Psoas muscle (tissue), 8 donors: ENCODE measurements at regions of chr10 and their contacts with region 1.

Region 1: GRCh38 chr10:7818295-7819122 is at the start of gene TAF3:
- DNase-seq: peak; percentile 93 to 96
- ATAC-seq: peak; percentile 94 to 97 (median 95)
- H3K4me3 ChIP-seq: peak within 1 kb of the TSS; percentile 87
- H3K27ac ChIP-seq: peak within 1 kb of the TSS; percentile 83
- H3K4me1 ChIP-seq: peaks cover 16% of the 10 kb centered on the region
- H3K27me3 ChIP-seq: no peaks in the 10 kb centered on the region
- CTCF ChIP-seq: no peak
- total RNA-seq, gene TAF3: 10.0 to 14.7 (median 13.6) TPM

Region 2: DNA sequence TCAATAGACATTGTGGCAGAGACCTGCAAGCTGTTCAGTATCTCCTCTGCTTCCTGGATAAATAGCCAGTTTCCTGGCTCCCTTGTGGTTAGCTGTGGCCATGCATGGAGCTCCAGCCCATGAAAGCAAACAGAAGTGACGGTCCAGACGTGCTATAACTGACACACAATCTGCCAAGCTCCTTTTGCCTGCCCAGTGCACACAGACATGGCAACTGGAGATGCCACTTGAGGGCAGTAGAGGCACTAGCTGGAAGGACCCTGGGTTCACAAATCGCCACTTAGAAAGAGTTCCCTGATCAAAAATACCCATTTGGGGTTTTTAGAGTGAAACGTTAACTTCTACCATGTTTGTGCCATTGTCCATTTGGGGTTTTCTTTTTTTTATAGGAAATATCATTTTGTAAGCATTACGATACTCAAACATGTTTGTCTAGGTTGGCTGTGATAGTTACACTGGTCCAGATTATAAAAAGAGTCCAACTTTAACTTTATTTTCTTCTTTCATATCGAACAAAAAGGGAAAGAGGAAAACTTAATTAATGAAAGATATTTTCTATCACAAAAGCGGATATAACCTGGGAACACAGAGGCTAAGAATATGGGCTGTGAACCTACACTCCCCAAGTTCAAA is 62.0 kb before region 1 on chr10:
- intact Hi-C with region 1: loop called (anchors 5 to 10 kb)
- DNase-seq: no peak
- ATAC-seq: peak in 3 of 4 donors; percentile 58 to 72 (median 67)
- H3K4me3 ChIP-seq: no peak overlapping the region
- H3K27ac ChIP-seq: no peak overlapping the region
- H3K4me1 ChIP-seq: no peaks in the 10 kb centered on the region
- H3K27me3 ChIP-seq: no peaks in the 10 kb centered on the region
- CTCF ChIP-seq: peak; percentile 31

Region 3: DNA sequence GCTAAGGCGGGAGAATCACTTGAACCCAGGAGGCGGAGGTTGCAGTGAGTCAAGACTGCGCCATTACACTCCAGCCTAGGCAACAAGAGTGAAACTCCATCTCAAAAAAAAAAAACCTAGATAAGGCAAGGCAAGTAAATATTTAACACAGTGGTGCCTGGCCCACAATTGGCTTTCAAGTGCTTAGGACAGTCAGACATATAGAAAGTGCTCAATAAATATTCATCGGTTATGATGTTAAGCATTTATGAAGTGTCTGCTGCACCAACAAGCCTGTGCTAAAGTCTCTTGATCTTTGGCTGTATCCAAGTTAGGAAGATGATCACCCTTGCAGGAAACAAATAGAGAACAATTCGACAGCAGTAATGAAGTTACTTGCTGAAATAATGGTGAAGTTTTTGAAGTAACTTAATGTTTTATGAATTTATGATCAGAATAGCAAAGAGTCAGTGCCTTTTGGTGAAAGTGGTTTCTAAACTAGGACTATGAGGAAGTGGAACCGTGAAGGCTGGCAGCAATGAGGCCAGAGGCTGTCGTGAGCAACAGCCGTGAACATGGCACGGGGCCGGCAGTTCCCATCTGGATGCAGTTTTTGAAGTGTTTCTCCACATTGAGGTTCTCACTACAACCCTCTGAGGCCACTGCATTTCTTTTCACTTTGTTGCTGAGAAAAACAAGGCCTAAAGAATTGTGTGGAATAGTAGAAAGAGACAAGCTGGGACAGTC is 187.9 kb after region 1 on chr10:
- intact Hi-C with region 1: no loop called
- DNase-seq: no peak
- ATAC-seq: no peak
- H3K4me3 ChIP-seq: no peak overlapping the region
- H3K27ac ChIP-seq: no peak overlapping the region
- H3K4me1 ChIP-seq: no peaks in the 10 kb centered on the region
- H3K27me3 ChIP-seq: no peaks in the 10 kb centered on the region
- CTCF ChIP-seq: no peak

Region 4: DNA sequence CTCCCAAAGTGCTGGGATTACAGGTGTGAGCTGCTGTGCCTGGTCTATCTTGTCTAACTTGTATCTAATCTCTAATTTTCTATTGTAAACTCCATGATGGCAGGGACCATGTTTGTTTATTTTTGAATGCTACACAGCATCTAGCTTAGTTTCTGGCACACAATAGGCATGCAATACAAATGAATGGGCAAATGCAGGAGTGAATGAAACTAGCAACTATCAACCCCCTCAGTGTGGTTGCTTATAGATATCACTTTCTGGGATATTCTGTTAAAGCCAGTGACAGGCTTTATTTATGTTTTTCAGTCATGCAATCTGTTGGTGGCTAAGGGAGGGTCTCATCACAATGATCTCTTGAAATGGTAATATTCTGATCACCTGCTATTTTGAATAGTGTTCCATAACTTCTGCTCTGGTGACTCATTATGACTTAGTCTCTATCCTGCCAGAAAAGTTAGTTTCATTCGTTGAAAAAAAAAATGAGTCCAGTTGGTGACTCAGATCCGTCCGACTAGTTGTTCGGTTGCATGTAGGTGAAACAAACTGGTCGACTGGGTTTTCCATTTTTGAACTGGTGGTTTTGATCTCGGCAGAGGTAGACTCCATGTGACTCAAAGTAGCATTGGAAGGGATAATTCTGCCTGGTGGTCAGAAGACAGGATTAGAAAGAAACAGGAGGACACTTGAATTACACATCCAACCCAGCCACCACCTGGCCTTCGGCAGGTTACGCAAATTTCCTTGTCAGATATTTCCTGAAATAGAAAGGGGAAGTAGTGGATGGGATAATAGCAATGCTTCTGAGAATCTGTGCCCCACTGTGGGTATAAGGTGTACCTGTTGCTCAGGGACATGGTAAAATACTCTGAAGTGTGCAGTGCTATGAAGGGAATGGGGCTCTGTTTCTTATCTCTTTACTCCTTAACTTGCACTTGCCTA is 312.7 kb after region 1 on chr10:
- intact Hi-C with region 1: no loop called
- DNase-seq: no peak
- ATAC-seq: no peak
- H3K4me3 ChIP-seq: no peak overlapping the region
- H3K27ac ChIP-seq: no peak overlapping the region
- H3K4me1 ChIP-seq: no peaks in the 10 kb centered on the region
- H3K27me3 ChIP-seq: peaks cover 0 to 3% (median 0%) of the 10 kb centered on the region in 3 donors
- CTCF ChIP-seq: no peak